Left lung (tissue), 14 donors: ENCODE measurements at regions of chr20 and their contacts with region 1.

Region 1: GRCh38 chr20:63381807-63382322 is 20.7 kb upstream of the CHRNA4 start:
- DNase-seq: peak in 2 of 4 donors; percentile 35 to 81
- ATAC-seq: peak; percentile 76
- H3K4me3 ChIP-seq: no peak overlapping the region
- H3K27ac ChIP-seq: no peak overlapping the region
- H3K4me1 ChIP-seq: no peaks in the 10 kb centered on the region
- H3K27me3 ChIP-seq: peaks cover 13 to 74% of the 10 kb centered on the region in 2 donors
- CTCF ChIP-seq: peak; percentile 81 to 94

Region 2: DNA sequence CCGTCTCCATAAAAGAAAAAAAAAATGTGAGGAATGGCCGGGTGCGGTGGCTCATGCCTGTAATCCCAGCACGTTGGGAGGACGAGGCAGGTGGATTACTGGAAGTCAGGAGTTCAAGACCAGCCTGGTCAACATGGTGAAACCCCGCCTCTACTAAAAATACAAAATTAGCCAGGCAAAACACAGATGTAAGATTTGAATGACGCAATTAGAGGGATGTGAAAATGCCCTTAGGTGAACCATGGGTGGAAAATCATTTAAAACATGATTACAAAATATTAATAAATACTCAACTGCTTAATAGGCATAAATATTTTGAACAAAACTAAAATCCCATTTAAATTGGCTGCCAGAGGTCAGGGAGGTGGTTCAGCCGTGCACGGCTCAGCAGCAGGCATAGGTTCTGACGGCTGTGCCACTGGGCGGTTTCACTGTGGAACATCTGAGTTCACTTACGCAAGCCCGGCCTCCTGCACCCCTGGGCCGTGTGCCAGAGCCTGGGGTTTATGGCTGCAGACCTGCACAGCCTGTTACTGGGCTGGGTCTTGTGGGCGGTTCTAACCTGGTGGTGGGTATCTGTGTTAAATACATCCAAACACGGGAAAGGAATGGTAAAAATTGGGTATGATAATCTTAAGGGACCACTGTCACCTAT is 543.9 kb before region 1 on chr20:
- intact Hi-C with region 1: no loop called
- DNase-seq: peak in 2 of 4 donors; percentile 59 to 73
- ATAC-seq: peak; percentile 56
- H3K4me3 ChIP-seq: no peak overlapping the region
- H3K27ac ChIP-seq: no peak overlapping the region
- H3K4me1 ChIP-seq: peaks cover 0 to 17% of the 10 kb centered on the region in 2 donors
- H3K27me3 ChIP-seq: peaks cover 0 to 9% of the 10 kb centered on the region in 2 donors
- CTCF ChIP-seq: no peak

Region 3: DNA sequence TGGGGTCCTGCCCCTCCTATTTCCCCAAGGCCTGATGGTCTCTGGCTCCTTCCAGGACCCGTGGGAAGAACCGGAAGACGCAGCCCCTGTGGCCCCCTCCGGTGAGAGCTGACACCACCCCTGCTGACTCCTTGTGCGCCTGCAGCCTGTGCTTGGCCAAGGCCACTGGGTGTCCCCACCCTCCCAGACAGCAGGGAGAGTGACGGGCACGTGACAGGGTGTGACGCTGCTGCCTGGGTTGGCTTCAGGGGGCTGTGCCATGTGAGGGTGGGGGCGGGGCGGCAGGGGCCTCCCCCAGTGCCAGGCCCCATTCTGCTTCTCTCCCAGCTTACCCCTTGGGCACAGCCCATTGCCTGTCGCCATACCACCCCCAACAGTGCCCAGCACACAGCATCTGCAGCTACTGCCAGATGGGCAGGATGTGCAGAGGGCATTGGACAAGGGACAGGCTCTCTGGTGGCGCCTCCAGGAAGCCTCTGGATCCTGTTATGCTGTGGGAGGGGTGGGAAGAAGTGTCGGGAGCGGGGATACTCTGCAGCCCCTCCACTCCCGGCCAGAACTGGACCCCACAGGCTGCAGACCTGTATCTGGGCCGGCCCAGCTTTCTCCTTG is 143.2 kb before region 1 on chr20:
- intact Hi-C with region 1: no loop called
- DNase-seq: peak in 1 of 4 donors; percentile 52
- ATAC-seq: no peak
- H3K4me3 ChIP-seq: no peak overlapping the region
- H3K27ac ChIP-seq: no peak overlapping the region
- H3K4me1 ChIP-seq: no peaks in the 10 kb centered on the region
- H3K27me3 ChIP-seq: peaks cover 0 to 95% of the 10 kb centered on the region in 2 donors
- CTCF ChIP-seq: no peak

Region 4: GRCh38 chr20:63309261-63310071 is 72.4 kb before region 1 on chr20:
- intact Hi-C with region 1: loop called in 1 of 2 experiments (anchors 5 kb)
- DNase-seq: peak in 3 of 4 donors; percentile 55 to 78 (median 71)
- ATAC-seq: peak; percentile 64
- H3K4me3 ChIP-seq: no peak overlapping the region
- H3K27ac ChIP-seq: no peak overlapping the region
- H3K4me1 ChIP-seq: peaks cover 0 to 4% of the 10 kb centered on the region in 2 donors
- H3K27me3 ChIP-seq: peaks cover 0 to 82% of the 10 kb centered on the region in 2 donors
- CTCF ChIP-seq: peak; percentile 86 to 88

Region 5: GRCh38 chr20:63434599-63435378 is 52.9 kb after region 1 on chr20:
- intact Hi-C with region 1: no loop called
- DNase-seq: peak in 2 of 4 donors; percentile 44 to 68
- ATAC-seq: peak; percentile 70
- H3K4me3 ChIP-seq: no peak overlapping the region
- H3K27ac ChIP-seq: no peak overlapping the region
- H3K4me1 ChIP-seq: no peaks in the 10 kb centered on the region
- H3K27me3 ChIP-seq: peaks cover 0 to 58% of the 10 kb centered on the region in 2 donors
- CTCF ChIP-seq: peak; percentile 67 to 84